Activated T-helper 2 cell treated with anti-CD3 and anti-CD28 coated beads, Interferon-gamma antibody, Interleukin-2, Interleukin-4, amounts not matched to agents 10 μg/mL and 5 μg/mL and 100 μg/mL, durations not matched to agents 14 hours and 24 hours and 36 hours (primary cell): ENCODE measurements at regions of chr11 and their contacts with region 1.

Region 1: GRCh38 chr11:123429913-123430720 is at the start of gene GRAMD1B:
- DNase-seq: peak; percentile 80
- H3K4me3 Mint-ChIP-seq: peak within 1 kb of the TSS; percentile 91
- H3K27ac Mint-ChIP-seq: peak within 1 kb of the TSS; percentile 86
- H3K4me1 Mint-ChIP-seq: peaks cover 44% of the 10 kb centered on the region
- H3K27me3 Mint-ChIP-seq: no peaks in the 10 kb centered on the region
- total RNA-seq, gene GRAMD1B: 159 and 166 TPM in 2 replicates

Region 2: DNA sequence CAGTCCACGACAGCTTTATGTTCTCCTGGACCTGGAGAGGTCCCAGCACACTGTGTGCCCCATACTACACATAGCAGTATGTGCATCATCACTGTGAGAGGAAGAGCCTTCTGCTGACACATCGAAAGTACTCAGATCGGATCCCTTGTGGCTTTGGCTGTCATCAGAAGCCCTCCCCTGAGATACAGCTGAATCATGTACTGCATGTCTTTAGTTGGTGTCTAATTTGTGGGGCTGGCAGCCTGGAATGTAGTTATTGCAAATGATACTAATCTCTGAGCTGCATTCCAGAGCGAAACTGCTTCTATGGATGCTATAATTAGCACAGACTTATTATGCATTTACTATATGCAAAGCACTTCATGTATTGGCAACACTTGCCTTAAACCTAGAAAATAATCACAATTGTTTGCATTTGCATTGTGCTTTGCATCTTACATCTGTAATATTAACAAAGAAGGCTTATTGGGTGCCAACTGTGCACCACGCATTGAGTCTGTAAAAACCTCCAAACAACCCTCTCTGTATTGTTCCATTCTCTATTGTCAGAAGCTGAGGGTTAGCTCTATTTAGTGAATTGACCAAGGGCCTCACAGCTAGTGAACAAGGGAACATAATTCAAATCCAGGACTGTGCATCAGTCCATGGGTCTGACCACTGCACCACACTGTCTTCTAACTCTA is 681.0 kb before region 1 on chr11:
- intact Hi-C with region 1: loop called (anchors 10 kb)
- DNase-seq: peak; percentile 59
- H3K4me3 Mint-ChIP-seq: no peak overlapping the region
- H3K27ac Mint-ChIP-seq: no peak overlapping the region
- H3K4me1 Mint-ChIP-seq: peaks cover 64% of the 10 kb centered on the region
- H3K27me3 Mint-ChIP-seq: peaks cover 5% of the 10 kb centered on the region

Region 3: DNA sequence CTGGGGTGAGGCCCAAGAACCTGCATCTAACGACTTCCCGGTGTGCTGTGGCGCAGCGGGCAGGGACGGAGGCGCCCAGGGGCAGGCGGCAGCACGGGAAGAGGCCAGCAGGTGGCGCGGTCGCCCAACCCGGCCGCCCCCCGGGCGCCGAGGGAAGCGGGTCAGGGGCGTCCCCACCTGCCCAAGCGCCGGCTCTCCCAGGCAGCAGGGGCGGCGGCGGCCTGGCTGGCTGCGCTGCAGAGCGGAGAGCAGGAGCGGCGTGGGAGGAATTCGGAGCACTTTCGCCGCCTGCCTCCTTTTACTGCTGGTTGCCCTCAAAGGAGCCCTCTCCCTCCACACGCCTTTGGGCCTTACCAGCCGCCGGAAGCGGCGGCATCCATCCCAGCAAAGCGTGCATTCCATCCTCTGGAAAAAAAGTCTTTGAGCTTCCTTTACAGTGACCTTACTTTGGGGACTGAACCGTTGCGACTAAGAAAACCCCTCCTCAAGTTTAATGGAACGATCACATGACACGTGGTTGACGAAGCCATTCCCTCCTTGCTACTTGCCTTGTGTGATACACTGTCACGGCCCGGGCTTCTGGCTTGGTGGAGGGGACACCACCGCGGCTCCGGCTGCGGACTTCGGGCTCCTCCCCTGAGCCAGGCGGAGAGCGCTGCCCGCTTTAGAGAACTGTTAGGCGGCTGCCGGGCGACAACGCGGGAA is 128.3 kb before region 1 on chr11:
- intact Hi-C with region 1: loop called (anchors 1 kb)
- DNase-seq: peak; percentile 67
- H3K4me3 Mint-ChIP-seq: peak overlapping the region; percentile 58
- H3K27ac Mint-ChIP-seq: peak overlapping the region; percentile 84
- H3K4me1 Mint-ChIP-seq: peaks cover 45% of the 10 kb centered on the region
- H3K27me3 Mint-ChIP-seq: peaks cover 2% of the 10 kb centered on the region

Region 4: DNA sequence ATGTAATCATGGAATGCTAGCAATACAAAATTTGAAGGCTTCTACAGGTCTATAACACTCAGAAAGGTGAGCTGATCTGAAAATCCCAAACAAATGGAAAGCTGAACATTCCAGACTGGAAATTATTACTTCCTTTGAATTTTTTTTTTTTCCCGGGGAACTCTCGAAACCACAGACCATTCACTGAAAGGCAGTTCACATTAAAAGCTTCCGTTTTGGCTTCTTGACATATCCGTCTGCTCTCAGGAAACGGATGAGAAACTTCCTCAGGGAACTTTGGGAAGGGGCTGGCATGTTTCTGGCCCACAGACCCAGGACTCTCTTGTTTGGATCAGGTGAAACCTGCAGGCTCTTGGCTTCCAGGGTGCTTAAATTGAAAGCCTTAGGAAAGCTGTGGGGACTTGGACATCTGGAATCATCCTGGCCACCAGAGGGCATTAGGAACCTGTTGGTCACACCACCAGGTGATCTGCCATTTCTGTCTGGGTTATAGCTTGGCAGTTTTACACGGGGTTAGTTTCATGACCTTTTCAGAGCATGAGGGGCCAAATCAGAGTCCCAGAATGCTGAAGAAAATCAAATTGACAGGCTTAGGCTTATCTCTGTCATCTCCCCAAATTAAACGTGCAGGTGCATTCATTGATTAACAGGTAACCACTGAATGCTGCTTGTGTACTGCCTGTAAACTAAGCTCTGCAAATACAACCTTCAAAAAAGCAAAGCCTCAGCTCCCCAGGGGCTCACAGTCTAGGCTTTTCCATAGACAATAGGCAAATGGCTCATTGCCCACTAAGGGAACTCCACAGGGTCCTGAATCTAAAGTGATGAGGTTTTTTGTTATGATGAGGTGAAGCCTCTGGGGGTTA is 22.8 kb before region 1 on chr11:
- intact Hi-C with region 1: loop called (anchors 2 kb)
- DNase-seq: peak; percentile 30
- H3K4me3 Mint-ChIP-seq: peak overlapping the region; percentile 66
- H3K27ac Mint-ChIP-seq: peak overlapping the region; percentile 56
- H3K4me1 Mint-ChIP-seq: peaks cover 43% of the 10 kb centered on the region
- H3K27me3 Mint-ChIP-seq: no peaks in the 10 kb centered on the region

Region 5: DNA sequence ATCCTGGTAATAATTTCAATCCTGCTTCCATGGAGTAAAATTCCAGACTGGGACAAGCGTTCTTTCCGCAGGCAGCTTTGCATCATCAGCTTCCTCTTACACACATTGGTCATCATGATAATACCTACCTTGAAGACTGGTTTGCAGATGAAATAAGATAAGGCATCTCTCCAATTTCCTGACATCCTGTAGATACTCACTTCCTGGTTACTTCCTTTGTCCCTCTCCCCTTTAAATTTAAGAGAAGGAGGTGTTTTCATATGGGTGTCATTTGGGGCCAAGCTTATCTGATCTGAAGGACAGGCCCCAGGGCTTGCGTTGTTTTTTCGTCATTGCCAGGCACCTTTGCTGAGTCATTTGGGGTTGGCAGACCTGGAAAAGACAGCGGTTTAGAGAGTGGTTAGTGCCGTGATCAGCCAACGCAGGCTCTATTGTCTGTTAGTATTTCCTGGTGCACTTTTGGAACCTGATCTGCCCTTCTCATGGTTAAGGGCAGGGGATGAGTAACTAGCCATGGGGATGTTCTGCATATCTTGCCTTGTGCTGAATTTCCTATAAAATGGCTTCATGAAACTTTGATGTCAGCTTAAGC is 24.0 kb after region 1 on chr11:
- intact Hi-C with region 1: loop called (anchors 1 kb)
- DNase-seq: peak; percentile 73
- H3K4me3 Mint-ChIP-seq: peak overlapping the region; percentile 84
- H3K27ac Mint-ChIP-seq: peak overlapping the region; percentile 97
- H3K4me1 Mint-ChIP-seq: peaks cover 88% of the 10 kb centered on the region
- H3K27me3 Mint-ChIP-seq: no peaks in the 10 kb centered on the region

Region 6: GRCh38 chr11:123478352-123478987 is 48.4 kb after region 1 on chr11:
- intact Hi-C with region 1: loop called (anchors 2 kb)
- DNase-seq: no peak
- H3K4me3 Mint-ChIP-seq: no peak overlapping the region
- H3K27ac Mint-ChIP-seq: peak overlapping the region; percentile 60
- H3K4me1 Mint-ChIP-seq: peaks cover 51% of the 10 kb centered on the region
- H3K27me3 Mint-ChIP-seq: no peaks in the 10 kb centered on the region